CD8-positive, alpha-beta T cell (primary cell): ENCODE measurements at regions of chr14 and their contacts with region 1.

Region 1: DNA sequence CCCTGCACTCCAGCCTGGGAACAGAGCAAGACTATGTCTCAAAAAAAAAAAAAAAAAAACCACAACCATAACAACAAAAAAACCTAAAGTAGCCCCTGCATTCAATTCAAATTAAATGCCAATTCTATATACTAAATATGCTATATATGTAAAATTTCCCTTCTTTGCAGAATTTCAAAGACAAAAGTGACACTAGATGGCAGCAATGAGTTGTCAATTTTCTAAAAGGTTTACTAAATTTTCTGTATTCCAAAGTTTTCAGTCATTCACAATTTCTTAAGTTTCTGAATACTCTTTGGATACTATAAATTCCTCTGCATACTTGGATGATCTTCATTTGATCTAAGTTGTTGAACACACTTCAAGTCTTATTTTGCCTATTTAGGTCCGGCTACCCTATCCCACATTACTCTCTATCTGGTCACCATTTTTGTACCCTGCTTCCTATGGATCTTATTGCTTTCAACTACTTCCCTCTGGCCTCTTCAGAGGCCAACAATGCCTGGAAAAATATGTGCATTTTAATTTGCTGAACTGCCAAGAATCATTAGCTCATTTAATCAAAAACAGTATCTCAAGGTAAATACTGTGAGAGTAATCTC is 27.9 kb downstream of the HNRNPC start:
- DNase-seq: peak in 2 of 9 experiments; percentile 55 to 65
- ATAC-seq: no peak
- H3K4me3 ChIP-seq: no peak overlapping the region
- H3K4me3 Mint-ChIP-seq: no peak overlapping the region
- H3K27ac ChIP-seq: peak overlapping the region in 1 of 2 experiments; percentile 10
- H3K27ac Mint-ChIP-seq: no peak overlapping the region
- H3K4me1 ChIP-seq: peaks cover 52% of the 10 kb centered on the region
- H3K4me1 Mint-ChIP-seq: peaks cover 81% of the 10 kb centered on the region
- H3K27me3 ChIP-seq: no peaks in the 10 kb centered on the region
- H3K27me3 Mint-ChIP-seq: no peaks in the 10 kb centered on the region
- CTCF ChIP-seq: peak; percentile 66

Region 2: DNA sequence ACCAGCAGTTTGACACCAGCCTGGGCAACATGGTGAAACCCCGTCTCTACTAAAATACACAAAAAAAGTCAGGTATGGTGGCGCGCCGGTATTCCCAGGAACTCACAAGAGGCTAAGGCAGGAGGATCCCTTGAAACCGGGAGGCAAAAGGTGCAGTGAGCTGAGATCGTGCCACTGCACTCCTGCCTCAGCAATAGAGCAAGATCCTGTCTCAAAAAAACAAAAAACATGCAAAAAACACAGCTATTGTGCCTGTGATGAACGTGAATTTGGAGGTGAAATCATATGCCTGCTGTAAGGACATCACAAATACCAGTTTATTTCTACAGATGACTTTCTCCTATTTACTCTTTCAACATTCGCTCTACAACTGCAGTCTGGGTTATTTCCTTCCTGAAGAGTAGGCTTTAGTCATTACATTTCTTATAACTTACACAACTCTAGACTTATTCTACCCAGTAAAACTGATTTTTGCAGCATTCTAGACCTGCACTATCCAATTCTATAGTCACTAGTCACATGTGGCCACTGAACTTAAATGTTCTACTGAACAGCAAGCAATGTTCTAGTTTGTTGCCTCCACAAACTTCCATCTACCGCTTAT is 20.3 kb before region 1 on chr14:
- CTCF ChIA-PET with region 1: no interaction called
- POLR2A ChIA-PET with region 1: no interaction called
- intact Hi-C with region 1: no loop called
- DNase-seq: no peak
- ATAC-seq: peak; percentile 33
- H3K4me3 ChIP-seq: no peak overlapping the region
- H3K4me3 Mint-ChIP-seq: peak overlapping the region; percentile 27
- H3K27ac ChIP-seq: peak overlapping the region in 1 of 2 experiments; percentile 9
- H3K27ac Mint-ChIP-seq: peak overlapping the region; percentile 83
- H3K4me1 ChIP-seq: peaks cover 46% of the 10 kb centered on the region
- H3K4me1 Mint-ChIP-seq: peaks cover 72% of the 10 kb centered on the region
- H3K27me3 ChIP-seq: no peaks in the 10 kb centered on the region
- H3K27me3 Mint-ChIP-seq: no peaks in the 10 kb centered on the region
- CTCF ChIP-seq: no peak

Region 3: GRCh38 chr14:21257394-21257909 is 16.1 kb after region 1 on chr14:
- CTCF ChIA-PET with region 1: interaction called, 5 read pairs
- POLR2A ChIA-PET with region 1: interaction called, 8 read pairs
- intact Hi-C with region 1: loop called (anchors 2 kb)
- DNase-seq: peak in 1 of 9 experiments; percentile 42
- ATAC-seq: peak; percentile 18
- H3K4me3 ChIP-seq: peak overlapping the region in 1 of 2 experiments; percentile 29
- H3K4me3 Mint-ChIP-seq: peak overlapping the region; percentile 72
- H3K27ac ChIP-seq: peak overlapping the region; percentile 15 to 41
- H3K27ac Mint-ChIP-seq: peak overlapping the region; percentile 81
- H3K4me1 ChIP-seq: peaks cover 79% of the 10 kb centered on the region
- H3K4me1 Mint-ChIP-seq: peaks cover 79% of the 10 kb centered on the region
- H3K27me3 ChIP-seq: no peaks in the 10 kb centered on the region
- H3K27me3 Mint-ChIP-seq: no peaks in the 10 kb centered on the region
- CTCF ChIP-seq: no peak

Region 4: GRCh38 chr14:21263656-21264411 is 22.5 kb after region 1 on chr14:
- CTCF ChIA-PET with region 1: interaction called, 3 read pairs
- POLR2A ChIA-PET with region 1: interaction called, 5 read pairs
- intact Hi-C with region 1: loop called (anchors 2 kb)
- DNase-seq: peak in 2 of 9 experiments; percentile 66 to 76
- ATAC-seq: peak; percentile 62
- H3K4me3 ChIP-seq: peak overlapping the region in 1 of 2 experiments; percentile 0
- H3K4me3 Mint-ChIP-seq: peak overlapping the region; percentile 99
- H3K27ac ChIP-seq: peak overlapping the region in 1 of 2 experiments; percentile 96
- H3K27ac Mint-ChIP-seq: peak overlapping the region; percentile 72
- H3K4me1 ChIP-seq: peaks cover 61% of the 10 kb centered on the region
- H3K4me1 Mint-ChIP-seq: peaks cover 75% of the 10 kb centered on the region
- H3K27me3 ChIP-seq: no peaks in the 10 kb centered on the region
- H3K27me3 Mint-ChIP-seq: no peaks in the 10 kb centered on the region
- CTCF ChIP-seq: no peak

Region 5: DNA sequence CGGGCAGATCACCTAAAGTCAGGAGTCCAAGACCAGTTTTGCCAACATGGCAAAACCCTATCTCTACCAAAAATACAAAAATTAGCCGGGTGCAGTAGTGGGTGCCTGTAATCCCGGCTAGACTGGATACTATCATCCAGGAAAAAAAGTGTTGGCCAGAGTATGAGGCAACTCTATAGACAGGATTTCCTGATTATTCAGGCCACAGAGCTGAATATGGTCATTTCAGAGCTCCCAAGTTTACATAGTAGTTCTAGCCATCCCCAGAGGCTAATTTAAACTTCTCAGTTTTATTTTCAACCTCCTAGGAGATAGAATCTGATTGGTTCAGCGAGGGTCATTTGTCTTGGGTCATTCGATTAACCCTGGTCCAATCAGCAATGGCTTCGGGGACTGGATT is 45.8 kb after region 1 on chr14:
- CTCF ChIA-PET with region 1: interaction called, 3 read pairs
- POLR2A ChIA-PET with region 1: no interaction called
- intact Hi-C with region 1: loop called in 1 of 2 experiments (anchors 1 kb)
- DNase-seq: no peak
- ATAC-seq: no peak
- H3K4me3 ChIP-seq: no peak overlapping the region
- H3K4me3 Mint-ChIP-seq: no peak overlapping the region
- H3K27ac ChIP-seq: no peak overlapping the region
- H3K27ac Mint-ChIP-seq: no peak overlapping the region
- H3K4me1 ChIP-seq: no peaks in the 10 kb centered on the region
- H3K4me1 Mint-ChIP-seq: no peaks in the 10 kb centered on the region
- H3K27me3 ChIP-seq: no peaks in the 10 kb centered on the region
- H3K27me3 Mint-ChIP-seq: no peaks in the 10 kb centered on the region
- CTCF ChIP-seq: no peak

Region 6: DNA sequence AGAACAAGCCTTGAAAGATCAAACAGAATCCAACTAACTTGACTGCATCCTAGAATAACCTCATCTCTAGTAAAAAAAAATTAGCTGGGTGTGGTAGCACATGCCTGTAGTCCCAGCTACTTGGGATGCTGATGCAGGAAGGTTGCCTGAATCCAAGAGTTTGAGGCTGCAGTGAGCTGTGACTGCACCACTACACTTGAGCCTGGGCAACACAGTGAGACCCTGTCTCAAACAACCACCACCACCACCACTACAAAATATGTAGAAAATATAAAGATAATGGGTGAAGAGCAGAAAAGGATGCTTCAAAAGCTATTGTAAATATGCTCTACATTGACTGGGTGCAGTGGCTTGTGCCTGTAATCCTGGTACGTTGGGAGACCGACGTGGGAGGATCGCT is 115.2 kb after region 1 on chr14:
- CTCF ChIA-PET with region 1: no interaction called
- POLR2A ChIA-PET with region 1: no interaction called
- intact Hi-C with region 1: loop called in 1 of 2 experiments (anchors 5 kb)
- DNase-seq: no peak
- ATAC-seq: no peak
- H3K4me3 ChIP-seq: no peak overlapping the region
- H3K4me3 Mint-ChIP-seq: no peak overlapping the region
- H3K27ac ChIP-seq: no peak overlapping the region
- H3K27ac Mint-ChIP-seq: no peak overlapping the region
- H3K4me1 ChIP-seq: no peaks in the 10 kb centered on the region
- H3K4me1 Mint-ChIP-seq: no peaks in the 10 kb centered on the region
- H3K27me3 ChIP-seq: no peaks in the 10 kb centered on the region
- H3K27me3 Mint-ChIP-seq: no peaks in the 10 kb centered on the region
- CTCF ChIP-seq: no peak

Region 7: GRCh38 chr14:21383848-21384493 is 142.7 kb after region 1 on chr14 and contains the start of gene SUPT16H:
- CTCF ChIA-PET with region 1: interaction called, 3 read pairs
- POLR2A ChIA-PET with region 1: no interaction called
- intact Hi-C with region 1: loop called (anchors 1 to 5 kb)
- DNase-seq: peak; percentile 83 to 97 (median 93)
- ATAC-seq: peak; percentile 88
- H3K4me3 ChIP-seq: peak within 1 kb of the TSS; percentile 87 to 91
- H3K4me3 Mint-ChIP-seq: peak within 1 kb of the TSS; percentile 98
- H3K27ac ChIP-seq: peak within 1 kb of the TSS; percentile 89 to 96
- H3K27ac Mint-ChIP-seq: peak within 1 kb of the TSS; percentile 99
- H3K4me1 ChIP-seq: peaks cover 17% of the 10 kb centered on the region
- H3K4me1 Mint-ChIP-seq: peaks cover 43% of the 10 kb centered on the region
- H3K27me3 ChIP-seq: no peaks in the 10 kb centered on the region
- H3K27me3 Mint-ChIP-seq: no peaks in the 10 kb centered on the region
- CTCF ChIP-seq: no peak
- total RNA-seq, gene SUPT16H: 53.5 to 54.9 TPM

Region 8: DNA sequence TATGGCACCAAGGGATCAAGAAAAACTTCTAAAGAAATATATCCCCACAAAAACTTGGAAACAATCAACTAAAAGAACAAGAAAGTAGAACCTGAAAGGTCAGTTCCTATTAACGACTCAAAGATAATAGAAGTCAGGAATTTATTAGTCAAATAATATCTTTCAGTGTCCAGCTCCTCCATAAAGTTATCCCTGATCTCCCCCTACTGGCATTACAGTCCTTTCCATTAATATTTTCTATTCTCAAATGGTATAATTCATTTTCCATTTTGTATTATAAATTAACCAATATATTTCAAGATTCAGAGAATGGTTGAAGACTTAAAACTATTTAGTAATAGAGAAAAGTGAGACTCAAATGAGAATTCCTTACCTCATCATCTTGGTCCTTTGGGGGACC is 154.1 kb after region 1 on chr14:
- CTCF ChIA-PET with region 1: no interaction called
- POLR2A ChIA-PET with region 1: no interaction called
- intact Hi-C with region 1: loop called in 1 of 2 experiments (anchors 5 kb)
- DNase-seq: no peak
- ATAC-seq: no peak
- H3K4me3 ChIP-seq: no peak overlapping the region
- H3K4me3 Mint-ChIP-seq: no peak overlapping the region
- H3K27ac ChIP-seq: no peak overlapping the region
- H3K27ac Mint-ChIP-seq: no peak overlapping the region
- H3K4me1 ChIP-seq: no peaks in the 10 kb centered on the region
- H3K4me1 Mint-ChIP-seq: no peaks in the 10 kb centered on the region
- H3K27me3 ChIP-seq: no peaks in the 10 kb centered on the region
- H3K27me3 Mint-ChIP-seq: no peaks in the 10 kb centered on the region
- CTCF ChIP-seq: no peak